Posterior cingulate gyrus (tissue), 11 donors: ENCODE measurements at regions of chr17 and their contacts with region 1.

Region 1: GRCh38 chr17:40909351-40909750 is 24.3 kb upstream of the KRT20 start:
- DNase-seq: peak; percentile 41 to 96 (median 75)

Region 2: DNA sequence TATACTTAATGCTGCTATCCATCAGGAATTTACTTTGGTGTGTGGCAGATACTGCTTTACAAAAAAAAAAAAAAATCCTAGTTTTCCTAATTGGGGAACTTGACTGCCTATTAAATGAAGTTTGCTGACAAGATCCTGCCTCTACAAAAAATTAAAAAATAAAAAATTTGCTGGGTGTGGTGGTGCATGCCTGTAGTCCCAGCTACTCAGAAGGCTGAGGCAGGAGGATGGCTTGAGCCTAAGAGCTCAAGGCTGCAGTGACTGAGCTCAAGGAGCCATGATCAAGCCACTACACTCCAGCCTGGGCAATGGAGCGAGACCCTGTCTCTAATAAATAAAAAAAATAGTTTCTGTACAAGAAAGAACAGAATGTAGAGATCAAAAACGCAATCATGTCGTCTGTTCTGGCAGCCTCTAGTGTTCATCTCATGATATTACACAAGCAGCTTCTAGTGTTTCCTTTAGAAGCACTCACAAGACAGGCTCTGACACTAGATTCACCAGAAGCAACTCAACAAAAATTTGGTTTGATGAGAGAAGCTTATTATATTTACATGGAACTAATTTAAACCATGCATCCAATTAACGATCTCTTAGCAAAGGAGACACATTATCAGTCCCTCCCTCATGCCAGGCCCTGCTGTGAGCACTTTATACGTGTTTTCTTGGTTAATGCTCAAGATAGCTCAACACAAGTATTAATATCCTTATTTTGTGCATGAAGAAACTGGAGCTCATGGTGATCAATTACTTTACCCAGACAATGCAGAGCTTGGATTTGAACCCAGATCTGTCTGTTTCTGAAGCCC is 412.9 kb after region 1 on chr17:
- intact Hi-C with region 1: loop called (anchors 2 kb)
- DNase-seq: no peak

Region 3: DNA sequence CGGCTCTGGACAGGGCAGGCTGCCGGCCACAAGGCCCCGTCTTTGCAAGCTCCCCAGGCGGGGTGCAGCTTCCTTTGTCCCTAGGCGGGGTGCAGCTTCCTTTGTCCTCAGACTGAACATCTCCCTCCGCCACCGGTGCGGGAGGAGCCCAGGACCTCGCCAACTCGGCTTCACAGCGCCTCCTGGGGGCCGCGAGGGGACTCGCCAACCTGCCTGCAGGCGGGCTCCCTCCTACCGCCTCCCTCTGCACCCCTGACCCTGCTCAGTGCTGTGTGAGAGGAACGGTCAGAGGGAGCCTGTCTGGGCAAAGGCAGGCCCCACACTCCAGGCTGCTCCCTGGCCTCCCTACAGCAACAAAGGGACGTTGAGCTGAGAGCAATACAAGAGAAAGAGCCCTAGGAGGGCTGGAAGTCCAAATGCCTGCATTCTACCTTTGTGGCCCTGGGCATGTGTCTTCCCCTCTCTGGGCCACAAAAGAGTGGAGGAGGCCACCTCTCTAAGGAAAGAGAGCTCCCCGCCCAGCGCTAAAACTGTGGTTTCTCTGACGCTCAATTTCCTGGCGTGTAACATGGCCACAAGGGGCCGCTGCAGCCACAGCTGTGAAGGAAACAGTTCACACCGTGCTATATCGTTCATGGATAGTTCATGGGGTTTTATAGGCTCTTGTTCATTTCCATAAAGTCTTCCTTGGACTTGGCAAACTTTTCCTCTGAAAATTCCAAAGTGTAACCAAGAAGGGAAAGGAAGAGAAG is 639.7 kb after region 1 on chr17:
- intact Hi-C with region 1: loop called (anchors 1 kb)
- DNase-seq: peak; percentile 59 to 95 (median 80)

Region 4: DNA sequence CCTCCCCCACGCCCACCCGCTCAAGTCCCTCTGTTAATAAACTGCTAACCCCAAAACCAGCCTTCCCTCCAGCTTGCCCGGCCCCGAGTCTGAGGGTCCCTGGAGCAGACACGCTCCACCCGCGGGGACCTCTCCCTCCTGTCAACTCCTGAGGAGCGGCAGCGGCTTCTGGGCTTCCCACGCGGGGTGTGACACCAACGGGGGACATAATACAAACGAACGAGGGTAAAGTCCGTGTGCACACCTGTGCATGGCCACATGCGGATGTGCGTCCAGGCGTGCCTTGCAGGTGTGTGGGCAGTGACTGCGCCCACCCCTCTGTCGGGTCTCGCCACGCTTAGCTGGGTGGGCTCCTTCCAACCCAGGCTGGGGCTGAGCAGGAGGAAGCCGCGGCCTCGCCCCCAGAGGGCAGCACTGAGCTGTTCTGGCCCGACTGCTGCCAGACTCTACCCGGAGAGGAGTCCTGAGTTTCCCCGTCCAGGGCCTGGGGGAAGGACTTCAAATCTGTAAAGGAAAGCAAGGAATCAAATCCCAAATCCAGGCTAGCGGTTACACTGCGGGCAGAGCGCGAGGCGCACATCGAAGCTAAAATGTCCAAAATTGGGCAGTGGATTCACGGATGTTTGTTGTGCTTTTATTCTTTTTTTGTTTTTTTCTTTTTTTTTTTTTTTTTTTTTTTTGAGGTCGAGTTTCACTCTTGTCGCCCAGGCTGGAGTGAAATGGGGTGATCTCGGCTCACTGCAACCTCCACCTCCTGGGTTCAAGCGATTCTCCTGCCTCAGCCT is 739.3 kb after region 1 on chr17:
- intact Hi-C with region 1: loop called (anchors 1 kb)
- DNase-seq: peak; percentile 70 to 97 (median 86)